Common myeloid progenitor, CD34-positive (primary cell): ENCODE measurements at regions of chr19 and their contacts with region 1.

Region 1: GRCh38 chr19:10431943-10432735 is 11.8 kb downstream of the PDE4A start:
- DNase-seq: peak in 2 of 3 donors; percentile 44 to 58
- H3K4me3 ChIP-seq: peak overlapping the region in 4 of 7 experiments; percentile 23 to 55 (median 41)
- H3K27ac ChIP-seq: no peak overlapping the region
- H3K4me1 ChIP-seq: peaks cover 4 to 39% (median 32%) of the 10 kb centered on the region in 4 experiments
- H3K27me3 ChIP-seq: peaks cover 10 to 52% (median 18%) of the 10 kb centered on the region in 5 experiments

Region 2: GRCh38 chr19:10416380-10417257 is 15.5 kb before region 1 on chr19:
- CTCF ChIA-PET with region 1: interaction called, 15 read pairs
- POLR2A ChIA-PET with region 1: interaction called, 3 read pairs
- DNase-seq: peak; percentile 95 to 97 (median 97)
- H3K4me3 ChIP-seq: peak overlapping the region; percentile 28 to 77 (median 67)
- H3K27ac ChIP-seq: peak overlapping the region in 1 of 2 experiments; percentile 58
- H3K4me1 ChIP-seq: peaks cover 5 to 63% (median 54%) of the 10 kb centered on the region in 4 experiments
- H3K27me3 ChIP-seq: peaks cover 4 to 54% (median 23%) of the 10 kb centered on the region in 5 experiments

Region 3: DNA sequence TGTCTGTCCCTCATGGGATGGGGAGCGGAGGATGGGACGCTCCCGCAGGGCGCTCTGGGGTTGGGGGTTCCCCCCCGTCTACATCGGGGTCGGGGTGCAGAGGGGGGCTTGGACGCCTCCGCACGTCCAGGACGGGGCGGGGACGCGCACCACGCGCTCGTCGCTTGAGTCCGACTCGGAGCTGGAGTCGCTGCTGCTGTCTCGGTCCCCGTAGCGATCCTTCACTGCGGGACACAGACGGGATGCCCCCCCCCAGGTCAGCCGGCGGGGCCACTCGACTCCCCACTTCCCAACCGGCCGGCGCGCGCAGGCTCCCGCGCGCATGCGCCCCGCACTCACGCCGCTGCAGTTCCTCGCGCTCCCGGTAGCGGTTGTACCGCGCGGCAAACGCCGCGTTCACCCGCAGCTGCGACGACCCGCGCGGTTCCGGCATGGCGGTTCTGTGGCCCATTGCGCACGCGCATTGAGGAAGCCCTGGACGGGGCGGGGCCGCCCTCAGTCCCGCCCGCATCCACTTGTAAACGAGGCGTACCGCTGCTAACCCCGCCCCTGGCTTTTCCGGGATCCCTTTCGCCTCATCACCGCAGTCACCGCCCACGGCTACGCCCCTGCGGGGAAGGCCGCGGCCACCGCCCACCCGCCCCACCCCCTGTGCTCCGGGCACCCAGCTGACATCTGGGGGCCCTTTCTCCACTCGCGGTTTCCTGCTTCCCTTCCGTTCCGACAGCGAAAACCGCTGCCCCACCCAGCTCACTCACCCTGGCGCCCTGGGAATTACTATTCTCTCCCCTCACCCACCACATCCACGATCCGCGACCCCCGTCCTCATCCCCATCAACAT is 133.6 kb after region 1 on chr19 and contains the start of gene KRI1:
- CTCF ChIA-PET with region 1: no interaction called
- POLR2A ChIA-PET with region 1: no interaction called
- DNase-seq: peak; percentile 97 to 99 (median 98)
- H3K4me3 ChIP-seq: peak within 1 kb of the TSS; percentile 76 to 93 (median 88)
- H3K27ac ChIP-seq: peak within 1 kb of the TSS; percentile 46 to 78
- H3K4me1 ChIP-seq: peaks cover 16 to 49% (median 46%) of the 10 kb centered on the region in 4 experiments
- H3K27me3 ChIP-seq: no peaks in the 10 kb centered on the region